Spleen (tissue), 13 donors: ENCODE measurements at regions of chr4 and their contacts with region 1.

Region 1: DNA sequence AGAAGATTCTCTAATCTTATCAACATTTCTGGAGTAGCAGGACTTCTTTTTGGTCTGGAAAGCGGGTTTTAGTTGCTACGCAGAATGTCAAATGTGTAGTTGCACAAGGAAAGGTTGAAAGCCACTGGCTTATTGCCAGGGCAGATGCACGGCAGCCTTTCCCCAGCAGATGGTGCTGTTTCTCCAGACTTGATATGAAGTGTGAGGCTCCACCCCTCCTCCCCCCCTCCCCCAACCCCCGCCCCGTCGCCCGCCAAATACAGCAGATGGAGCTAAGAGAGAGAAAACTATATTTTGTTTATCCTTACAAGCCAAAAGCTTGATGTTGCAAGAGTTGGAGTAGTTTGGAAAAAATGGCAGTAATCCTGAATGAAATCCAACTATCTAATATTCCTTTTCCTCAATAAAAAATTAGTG is 32.0 kb downstream of the ENOPH1 start:
- DNase-seq: peak; percentile 89
- H3K4me3 ChIP-seq: no peak overlapping the region
- H3K27ac ChIP-seq: no peak overlapping the region
- H3K4me1 ChIP-seq: peaks cover 0 to 14% (median 7%) of the 10 kb centered on the region in 6 donors
- H3K27me3 ChIP-seq: no peaks in the 10 kb centered on the region
- CTCF ChIP-seq: peak; percentile 27 to 96 (median 92)
- POLR2A ChIP-seq: no peak

Region 2: DNA sequence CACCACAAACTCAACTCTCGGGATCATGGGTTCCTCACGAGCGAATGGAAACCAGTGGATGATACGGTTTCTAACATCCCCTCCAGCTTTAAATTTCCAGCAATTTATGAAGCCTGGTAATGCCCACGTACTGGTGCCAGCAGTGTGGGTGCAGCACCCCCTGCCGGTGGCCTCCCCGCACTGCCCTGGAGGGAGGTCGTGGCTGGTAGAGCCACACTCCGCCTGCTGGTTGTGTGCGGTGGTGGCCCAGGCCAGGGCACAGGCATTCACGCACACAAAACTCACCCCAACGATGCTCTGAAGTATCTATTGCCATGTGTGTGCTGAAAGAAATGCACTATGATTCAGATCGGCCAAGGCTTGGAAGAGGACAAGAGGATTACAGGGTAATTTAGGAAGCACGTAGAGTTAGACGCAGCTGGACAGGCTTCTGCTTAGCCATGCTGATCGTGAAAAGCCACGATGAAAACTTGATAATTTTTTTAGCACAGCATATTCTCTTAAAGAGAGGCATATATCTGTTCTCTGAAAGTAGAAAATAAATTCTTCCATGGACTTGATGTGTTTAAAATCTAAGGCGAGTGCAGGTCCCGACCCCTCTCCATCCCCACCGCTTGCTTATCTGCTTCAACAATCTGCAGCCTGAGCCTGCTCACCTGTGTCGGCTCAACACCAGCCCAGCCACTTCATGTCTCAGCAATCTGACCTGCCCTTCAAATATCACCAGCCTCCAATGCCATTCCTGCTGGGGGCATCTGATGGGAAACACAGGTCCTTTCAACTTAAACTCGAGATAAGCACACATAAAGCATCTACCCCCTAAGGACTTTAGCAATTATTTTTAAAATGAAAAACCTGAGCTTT is 277.1 kb after region 1 on chr4:
- intact Hi-C with region 1: loop called (anchors 5 kb)
- DNase-seq: peak; percentile 88
- H3K4me3 ChIP-seq: peak overlapping the region in 1 of 8 donors; percentile 34
- H3K27ac ChIP-seq: no peak overlapping the region
- H3K4me1 ChIP-seq: peaks cover 0 to 7% (median 0%) of the 10 kb centered on the region in 6 donors
- H3K27me3 ChIP-seq: no peaks in the 10 kb centered on the region
- CTCF ChIP-seq: peak; percentile 76 to 99 (median 94)
- POLR2A ChIP-seq: no peak